Natural killer cell (primary cell): ENCODE measurements at regions of chr19 and their contacts with region 1.

Region 1: DNA sequence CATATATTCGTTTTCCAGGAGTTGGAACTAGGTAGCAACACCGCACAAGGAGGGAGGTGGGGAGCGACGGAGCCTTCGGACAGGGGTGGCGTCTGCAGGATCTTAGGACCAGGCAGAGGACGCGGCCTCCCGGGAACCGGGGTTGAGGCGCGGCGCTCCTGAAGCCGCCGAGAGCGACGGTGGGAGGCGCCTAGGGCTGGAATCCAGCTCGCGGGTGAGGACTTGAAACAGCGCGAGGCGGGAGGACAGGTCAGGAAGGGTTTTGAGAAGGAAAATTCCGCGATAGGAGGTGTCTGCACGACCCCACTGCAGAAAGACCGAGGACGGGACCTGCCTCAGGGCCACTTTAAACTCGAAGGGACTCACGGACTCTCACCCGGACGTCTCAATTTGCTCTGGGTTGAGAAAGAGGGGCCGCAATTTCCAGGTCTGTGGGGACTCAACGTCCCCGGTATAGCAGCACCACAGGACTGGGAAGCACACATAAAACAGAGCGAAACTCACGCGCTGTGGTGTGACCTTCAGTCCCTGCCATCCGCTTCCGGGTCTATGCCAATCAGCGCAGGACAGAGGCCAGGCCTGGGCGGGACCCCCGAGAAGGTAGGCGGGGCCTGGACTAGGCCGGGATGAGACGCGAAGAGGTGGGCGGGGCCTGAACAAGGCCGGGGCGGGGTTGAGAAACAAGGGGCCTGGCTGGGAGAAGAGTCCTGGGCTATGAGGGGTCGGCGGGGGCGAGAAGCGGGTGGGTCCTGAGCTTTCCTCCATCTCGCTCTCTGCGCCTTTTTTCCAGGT is at the start of gene ZNF320:
- DNase-seq: peak; percentile 94 to 95
- ATAC-seq: peak; percentile 99 to 100 (median 100)
- H3K4me3 ChIP-seq: peak within 1 kb of the TSS; percentile 80
- H3K4me3 Mint-ChIP-seq: peak within 1 kb of the TSS; percentile 93
- H3K27ac ChIP-seq: peak within 1 kb of the TSS; percentile 74
- H3K27ac Mint-ChIP-seq: peak within 1 kb of the TSS; percentile 85 to 90
- H3K4me1 ChIP-seq: peaks cover 18% of the 10 kb centered on the region
- H3K4me1 Mint-ChIP-seq: peaks cover 22 to 25% of the 10 kb centered on the region in 2 donors
- H3K27me3 ChIP-seq: no peaks in the 10 kb centered on the region
- H3K27me3 Mint-ChIP-seq: no peaks in the 10 kb centered on the region
- CTCF ChIP-seq: no peak
- total RNA-seq, gene ZNF320: 10.3 to 14.0 (median 11.9) TPM

Region 2: GRCh38 chr19:52664461-52664860 is 232.9 kb before region 1 on chr19:
- intact Hi-C with region 1: no loop called
- DNase-seq: no peak
- ATAC-seq: no peak
- H3K4me3 ChIP-seq: no peak overlapping the region
- H3K4me3 Mint-ChIP-seq: no peak overlapping the region
- H3K27ac ChIP-seq: no peak overlapping the region
- H3K27ac Mint-ChIP-seq: no peak overlapping the region
- H3K4me1 ChIP-seq: no peaks in the 10 kb centered on the region
- H3K4me1 Mint-ChIP-seq: peaks cover 9 to 15% of the 10 kb centered on the region in 2 donors
- H3K27me3 ChIP-seq: no peaks in the 10 kb centered on the region
- H3K27me3 Mint-ChIP-seq: no peaks in the 10 kb centered on the region
- CTCF ChIP-seq: no peak

Region 3: DNA sequence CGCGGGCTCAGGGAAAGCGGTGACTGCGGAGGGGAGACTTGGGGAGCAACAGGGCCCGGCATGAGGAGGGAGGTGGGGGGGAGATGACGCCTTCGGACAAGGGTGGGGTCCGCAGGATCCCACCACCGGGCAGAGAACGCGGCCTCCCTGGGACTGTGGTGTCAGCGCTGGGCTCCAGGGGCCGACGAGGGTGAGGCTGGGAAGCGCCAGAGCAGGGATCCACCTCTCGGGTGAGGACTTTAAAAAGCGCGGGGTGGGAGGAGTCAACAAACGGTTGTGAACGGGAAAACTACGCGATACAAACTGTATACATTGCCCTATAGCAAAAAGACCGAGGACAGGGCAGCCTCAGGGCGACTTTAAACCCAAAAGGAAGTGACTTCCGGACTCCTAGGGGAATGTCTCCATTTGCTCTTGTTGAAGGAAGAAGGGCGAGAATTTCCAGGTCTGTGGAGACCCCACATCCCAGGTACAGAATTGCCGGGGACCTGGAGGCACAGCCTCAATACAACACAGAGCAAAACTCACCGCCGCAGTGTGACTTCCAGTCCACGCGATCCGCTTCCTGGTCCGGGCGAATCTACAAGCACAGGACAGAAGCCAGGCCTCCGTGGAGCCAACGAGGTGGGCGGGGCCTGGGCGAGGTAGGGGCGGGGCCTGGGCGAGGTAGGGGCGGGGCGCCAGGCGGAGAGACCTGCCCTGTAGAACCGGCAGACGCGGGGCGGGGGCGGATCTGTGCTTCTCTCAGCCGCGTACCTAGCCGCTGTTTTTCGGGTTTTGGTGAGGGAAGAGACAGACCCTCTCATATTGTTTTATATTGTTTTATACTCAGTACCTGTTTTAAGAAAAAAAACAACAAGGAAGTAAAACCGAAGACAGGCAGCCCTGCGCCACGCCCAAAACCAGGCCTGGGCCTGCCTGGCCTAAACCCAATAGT is 25.8 kb after region 1 on chr19 and contains the start of gene ZNF888:
- intact Hi-C with region 1: loop called (anchors 2 kb)
- DNase-seq: peak; percentile 84 to 88
- ATAC-seq: peak; percentile 100
- H3K4me3 ChIP-seq: peak within 1 kb of the TSS; percentile 76
- H3K4me3 Mint-ChIP-seq: peak within 1 kb of the TSS; percentile 89
- H3K27ac ChIP-seq: peak within 1 kb of the TSS; percentile 69
- H3K27ac Mint-ChIP-seq: peak within 1 kb of the TSS; percentile 57 to 80
- H3K4me1 ChIP-seq: peaks cover 19% of the 10 kb centered on the region
- H3K4me1 Mint-ChIP-seq: peaks cover 16 to 29% of the 10 kb centered on the region in 2 donors
- H3K27me3 ChIP-seq: no peaks in the 10 kb centered on the region
- H3K27me3 Mint-ChIP-seq: no peaks in the 10 kb centered on the region
- CTCF ChIP-seq: no peak
- total RNA-seq, gene ZNF888: 5.1 to 13.5 (median 8.0) TPM

Region 4: DNA sequence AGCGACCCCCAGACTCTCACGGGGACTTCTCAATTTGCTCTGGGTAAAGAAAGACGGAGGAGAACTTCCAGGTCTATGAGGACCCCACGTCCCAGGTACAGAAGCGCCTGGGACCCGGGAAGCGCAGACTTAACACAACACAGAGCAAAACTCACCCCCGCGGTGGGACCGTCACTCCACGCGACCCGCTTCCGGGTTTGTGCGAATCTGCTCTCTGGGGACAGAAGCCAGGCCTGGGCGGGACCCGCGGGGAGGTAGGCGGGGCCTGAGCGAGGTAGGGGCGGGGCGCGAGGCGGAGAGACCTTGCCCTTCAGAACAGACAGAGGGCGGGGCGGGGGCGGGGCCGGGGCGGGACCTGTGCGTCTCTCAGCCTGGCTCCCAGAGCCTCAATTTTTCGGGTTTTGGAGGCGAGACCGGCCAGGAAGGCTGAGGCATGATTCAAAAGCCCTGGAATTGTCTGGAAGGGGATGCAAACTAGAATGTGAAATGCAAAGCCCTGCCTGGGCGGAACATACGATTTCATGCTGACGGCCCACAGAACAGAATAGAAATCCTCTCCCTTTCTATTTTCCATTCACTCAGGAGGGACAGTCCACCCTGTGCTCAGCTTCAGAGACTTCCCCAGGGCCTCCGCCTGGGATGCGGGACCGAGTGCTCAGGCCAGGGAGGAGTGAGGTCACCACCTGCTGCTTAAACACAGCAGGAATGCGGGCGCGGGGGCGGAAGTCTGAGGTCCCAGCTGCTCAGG is 45.2 kb after region 1 on chr19:
- intact Hi-C with region 1: loop called (anchors 5 kb)
- DNase-seq: peak; percentile 94 to 100
- ATAC-seq: peak; percentile 99 to 100 (median 99)
- H3K4me3 ChIP-seq: peak overlapping the region; percentile 74
- H3K4me3 Mint-ChIP-seq: peak overlapping the region; percentile 97
- H3K27ac ChIP-seq: peak overlapping the region; percentile 75
- H3K27ac Mint-ChIP-seq: peak overlapping the region; percentile 87 to 91
- H3K4me1 ChIP-seq: peaks cover 21% of the 10 kb centered on the region
- H3K4me1 Mint-ChIP-seq: peaks cover 24 to 29% of the 10 kb centered on the region in 2 donors
- H3K27me3 ChIP-seq: no peaks in the 10 kb centered on the region
- H3K27me3 Mint-ChIP-seq: no peaks in the 10 kb centered on the region
- CTCF ChIP-seq: no peak